Activated CD4-positive, alpha-beta memory T cell treated with anti-CD3 and anti-CD28 coated beads, Interleukin-2, amount 10 ng/mL, durations not matched to agents 7 days and 5 days (primary cell): ENCODE measurements at regions of chr11 and their contacts with region 1.

Region 1: DNA sequence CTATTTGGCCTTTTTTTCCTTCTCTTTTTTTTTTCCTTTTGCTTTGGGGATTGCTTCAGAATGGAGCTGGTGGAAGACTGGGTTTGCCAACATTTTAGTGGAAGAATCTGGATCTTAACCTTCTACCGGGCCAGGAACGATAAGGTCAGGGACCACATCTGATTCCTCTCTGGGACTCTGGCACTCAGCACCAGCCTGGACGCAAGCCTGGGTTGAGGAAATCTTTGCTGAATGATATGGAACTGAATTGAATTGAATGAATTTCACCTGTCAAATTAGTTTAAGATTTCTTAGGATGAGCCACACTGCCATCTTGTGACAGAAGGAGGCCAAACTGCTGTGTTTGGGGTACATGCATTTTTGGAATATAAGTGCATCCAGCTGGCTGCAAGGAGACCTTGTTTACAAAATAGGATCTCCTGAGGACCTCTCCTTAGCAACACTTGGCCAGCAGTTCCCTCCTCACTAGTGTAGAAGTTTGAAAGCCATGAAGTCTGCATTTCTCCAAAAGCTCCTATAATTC is 30.4 kb downstream of the TPBGL start:
- DNase-seq: peak; percentile 41
- H3K4me3 Mint-ChIP-seq: no peak overlapping the region
- H3K27ac Mint-ChIP-seq: no peak overlapping the region
- H3K4me1 Mint-ChIP-seq: peaks cover 23% of the 10 kb centered on the region
- H3K27me3 Mint-ChIP-seq: no peaks in the 10 kb centered on the region

Region 2: DNA sequence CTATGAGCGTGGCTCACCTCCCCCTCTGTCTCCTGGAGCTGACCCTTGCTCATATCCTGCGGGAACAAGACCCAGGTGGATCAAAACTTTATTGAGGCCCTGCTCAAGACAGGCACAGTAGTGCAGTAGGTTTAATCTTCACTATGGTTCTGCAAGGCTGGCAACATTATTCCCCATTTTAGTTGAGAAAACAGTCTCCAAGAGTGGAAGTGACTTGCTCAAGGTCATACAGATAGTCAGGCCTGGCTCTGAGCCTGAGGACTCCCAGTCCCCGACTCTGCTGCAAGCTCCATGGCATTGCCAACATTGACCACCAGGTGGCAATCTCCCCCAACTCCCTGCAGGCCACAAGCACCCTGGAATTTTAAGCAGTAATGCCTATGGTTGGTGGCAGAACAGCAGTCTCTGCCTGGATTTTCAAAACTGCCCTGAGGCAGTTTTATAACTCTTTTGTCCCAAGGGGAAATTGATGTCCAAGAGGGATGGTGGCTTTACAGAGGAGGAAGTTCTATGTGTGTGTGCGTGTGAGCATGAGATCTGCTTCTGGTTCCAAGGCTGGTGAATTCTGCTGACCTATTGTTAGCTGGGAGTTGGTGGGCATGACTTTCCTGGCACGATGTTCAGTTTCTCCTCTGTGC is 248.1 kb before region 1 on chr11:
- CTCF ChIA-PET with region 1: interaction called, 11 read pairs
- POLR2A ChIA-PET with region 1: no interaction called
- DNase-seq: peak; percentile 79
- H3K4me3 Mint-ChIP-seq: no peak overlapping the region
- H3K27ac Mint-ChIP-seq: no peak overlapping the region
- H3K4me1 Mint-ChIP-seq: no peaks in the 10 kb centered on the region
- H3K27me3 Mint-ChIP-seq: no peaks in the 10 kb centered on the region

Region 3: DNA sequence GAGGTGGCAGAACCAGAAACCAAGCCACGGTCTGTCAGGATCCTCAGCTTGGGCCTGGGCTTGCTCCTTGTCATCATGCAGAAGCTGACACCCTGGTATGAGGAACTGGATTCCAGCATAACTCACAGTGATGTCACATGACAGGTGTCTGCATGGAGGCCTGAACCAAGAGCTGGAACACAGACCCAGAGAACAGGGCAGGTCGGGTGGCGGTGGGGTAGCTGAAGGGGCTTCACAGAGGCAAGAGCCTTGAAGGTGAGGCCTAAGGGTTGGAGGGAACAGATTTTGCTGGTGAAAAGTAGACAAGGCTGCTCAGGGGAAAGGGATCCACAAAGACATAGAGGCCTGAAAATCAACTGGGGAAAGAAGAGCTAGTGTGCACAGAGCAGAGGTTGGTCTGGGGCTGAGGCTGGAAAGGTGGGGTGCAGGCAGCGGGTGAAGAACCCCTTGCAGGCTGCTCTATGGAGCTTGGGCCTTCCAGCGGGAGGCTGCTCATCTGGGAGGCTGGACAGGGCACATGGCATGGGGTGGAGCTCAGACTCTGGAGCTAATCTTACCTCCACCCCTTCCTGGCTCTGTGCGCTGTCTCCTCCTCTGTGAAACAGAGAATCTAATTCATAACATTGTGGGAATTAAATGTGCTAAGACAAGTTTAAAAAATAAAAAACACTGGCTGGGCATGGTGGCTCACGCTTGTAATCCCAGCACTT is 109.9 kb after region 1 on chr11:
- CTCF ChIA-PET with region 1: interaction called, 339 read pairs
- POLR2A ChIA-PET with region 1: interaction called, 13 read pairs
- DNase-seq: no peak
- H3K4me3 Mint-ChIP-seq: no peak overlapping the region
- H3K27ac Mint-ChIP-seq: no peak overlapping the region
- H3K4me1 Mint-ChIP-seq: peaks cover 19% of the 10 kb centered on the region
- H3K27me3 Mint-ChIP-seq: no peaks in the 10 kb centered on the region

Region 4: GRCh38 chr11:75554258-75555022 is 283.5 kb after region 1 on chr11:
- CTCF ChIA-PET with region 1: no interaction called
- POLR2A ChIA-PET with region 1: no interaction called
- DNase-seq: no peak
- H3K4me3 Mint-ChIP-seq: no peak overlapping the region
- H3K27ac Mint-ChIP-seq: no peak overlapping the region
- H3K4me1 Mint-ChIP-seq: peaks cover 2% of the 10 kb centered on the region
- H3K27me3 Mint-ChIP-seq: peaks cover 6% of the 10 kb centered on the region